ENCODE measurements at regions of chr6 and their contacts with region 1.

Region 1: GRCh38 chr6:167543602-167544497 is 219.0 kb downstream of the TTLL2 start:
- DNase-seq: no peak
- ATAC-seq: peak; percentile 90

Region 2: DNA sequence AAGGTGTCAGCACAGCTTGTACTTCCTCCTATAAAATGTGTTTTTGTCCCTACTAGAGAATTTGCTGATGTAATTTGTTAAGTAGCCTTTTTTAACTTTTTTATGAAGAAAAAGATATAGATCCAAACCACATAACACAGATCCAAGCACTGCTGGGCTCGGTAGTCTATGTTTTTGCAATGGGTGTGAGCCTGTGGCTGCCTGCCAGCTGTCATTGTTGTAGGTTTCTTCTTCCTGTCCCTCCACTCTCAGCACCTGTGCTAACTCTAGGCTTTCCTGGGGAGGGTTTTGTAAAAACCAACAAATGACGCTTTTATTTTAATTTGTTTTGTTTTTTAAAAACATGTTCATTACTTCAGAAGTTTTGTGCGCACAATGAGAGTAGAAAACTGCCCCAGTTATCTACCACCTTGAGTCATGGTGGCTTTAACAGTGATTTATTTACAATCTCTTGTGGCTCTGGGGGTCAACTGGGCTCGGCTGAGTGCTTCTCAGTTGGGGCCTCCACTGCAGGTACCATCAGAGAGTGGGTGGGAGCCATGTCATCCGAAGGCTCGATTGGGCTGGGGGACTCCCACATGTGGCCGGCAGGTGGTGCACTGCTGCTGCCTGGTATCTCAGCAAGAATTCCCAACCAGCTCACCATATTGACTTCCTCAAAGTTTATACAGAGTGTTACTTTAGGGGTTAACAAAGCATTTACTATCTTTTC is 424.0 kb before region 1 on chr6:
- intact Hi-C with region 1: no loop called
- DNase-seq: no peak
- ATAC-seq: no peak

Region 3: GRCh38 chr6:167401525-167402194 is 142.2 kb before region 1 on chr6:
- intact Hi-C with region 1: no loop called
- DNase-seq: peak; percentile 30
- ATAC-seq: no peak

Region 4: DNA sequence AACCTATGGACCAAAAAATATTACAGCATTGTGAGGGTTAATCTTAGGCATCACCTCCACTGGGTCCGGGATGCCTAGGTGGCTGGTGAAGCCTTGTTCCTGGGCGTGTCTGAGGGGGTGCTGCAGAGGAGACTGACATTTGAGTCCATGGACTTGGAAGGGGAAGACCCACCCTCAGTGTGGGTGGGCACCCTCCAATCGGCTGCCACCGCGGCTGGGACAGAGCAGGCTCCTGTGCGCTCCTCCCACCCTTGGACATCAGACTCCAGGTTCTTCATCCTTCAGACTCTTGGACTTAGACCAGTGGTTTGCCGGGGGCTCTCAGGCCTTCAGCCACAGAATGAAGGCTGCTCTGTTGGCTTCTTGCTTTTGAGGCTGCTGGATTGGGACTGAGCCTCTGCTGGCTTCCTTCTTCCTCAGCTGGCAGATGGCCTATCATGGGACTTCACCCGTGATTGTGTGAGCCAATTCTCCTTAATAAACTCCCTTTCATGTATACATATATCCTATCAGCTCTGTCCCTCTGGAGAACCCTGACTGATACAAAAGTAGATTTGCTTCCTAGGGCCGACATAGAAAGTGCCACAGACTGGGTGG is 105.9 kb before region 1 on chr6:
- intact Hi-C with region 1: no loop called
- DNase-seq: no peak
- ATAC-seq: no peak

Region 5: GRCh38 chr6:167479901-167480648 is 63.8 kb before region 1 on chr6:
- intact Hi-C with region 1: loop called (anchors 5 kb)
- DNase-seq: no peak
- ATAC-seq: no peak

Region 6: GRCh38 chr6:167751436-167752130 is 207.7 kb after region 1 on chr6:
- intact Hi-C with region 1: no loop called
- DNase-seq: no peak
- ATAC-seq: no peak